Activated CD4-positive, alpha-beta memory T cell treated with anti-CD3 and anti-CD28 coated beads for 36 hours (primary cell): ENCODE measurements at regions of chr17 and their contacts with region 1.

Region 1: DNA sequence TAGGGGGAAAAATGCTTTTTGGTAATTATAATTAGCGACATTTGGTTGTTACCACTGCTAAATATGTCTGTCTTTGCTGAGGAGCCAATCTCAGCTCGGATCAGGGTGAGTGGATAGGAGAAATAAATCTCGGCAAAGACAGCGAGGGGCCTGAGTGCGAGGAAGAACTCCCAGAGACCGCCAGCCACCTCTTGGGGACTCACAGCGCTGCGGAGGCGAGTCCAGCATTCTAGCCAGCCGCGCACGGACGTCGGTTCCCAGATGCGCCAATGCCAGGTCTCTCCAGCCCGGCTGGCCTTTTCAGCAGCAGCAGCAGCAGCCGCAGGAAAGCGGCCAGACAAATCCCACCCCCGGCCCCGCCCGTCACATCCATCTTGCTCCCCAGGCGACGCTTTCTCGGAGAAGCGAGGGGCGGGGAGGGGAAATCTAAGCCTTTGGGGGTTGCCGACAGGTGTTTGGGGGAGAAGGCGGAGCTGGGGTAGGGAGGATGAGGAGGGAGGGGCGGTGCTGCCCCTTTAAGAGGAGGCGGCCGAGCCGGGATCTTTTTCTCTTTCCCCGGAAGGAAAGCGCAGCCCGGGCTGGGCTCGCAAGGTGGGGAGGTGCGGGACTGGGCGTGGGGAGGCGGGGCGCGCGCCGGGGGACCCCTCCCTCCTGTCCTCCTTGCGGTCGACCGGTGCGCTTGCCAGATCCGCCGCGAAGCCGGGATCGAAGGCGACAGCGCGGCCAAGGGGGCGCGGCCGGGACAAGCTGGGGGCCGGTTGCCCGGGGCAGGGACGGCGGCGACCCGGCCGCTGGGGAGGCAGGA is at the start of gene ITGA3:
- DNase-seq: peak; percentile 78
- H3K4me3 Mint-ChIP-seq: peak within 1 kb of the TSS; percentile 87
- H3K27ac Mint-ChIP-seq: peak within 1 kb of the TSS; percentile 84
- H3K4me1 Mint-ChIP-seq: peaks cover 31% of the 10 kb centered on the region
- H3K27me3 Mint-ChIP-seq: no peaks in the 10 kb centered on the region
- total RNA-seq, gene ITGA3: 15.8 to 17.6 TPM

Region 2: DNA sequence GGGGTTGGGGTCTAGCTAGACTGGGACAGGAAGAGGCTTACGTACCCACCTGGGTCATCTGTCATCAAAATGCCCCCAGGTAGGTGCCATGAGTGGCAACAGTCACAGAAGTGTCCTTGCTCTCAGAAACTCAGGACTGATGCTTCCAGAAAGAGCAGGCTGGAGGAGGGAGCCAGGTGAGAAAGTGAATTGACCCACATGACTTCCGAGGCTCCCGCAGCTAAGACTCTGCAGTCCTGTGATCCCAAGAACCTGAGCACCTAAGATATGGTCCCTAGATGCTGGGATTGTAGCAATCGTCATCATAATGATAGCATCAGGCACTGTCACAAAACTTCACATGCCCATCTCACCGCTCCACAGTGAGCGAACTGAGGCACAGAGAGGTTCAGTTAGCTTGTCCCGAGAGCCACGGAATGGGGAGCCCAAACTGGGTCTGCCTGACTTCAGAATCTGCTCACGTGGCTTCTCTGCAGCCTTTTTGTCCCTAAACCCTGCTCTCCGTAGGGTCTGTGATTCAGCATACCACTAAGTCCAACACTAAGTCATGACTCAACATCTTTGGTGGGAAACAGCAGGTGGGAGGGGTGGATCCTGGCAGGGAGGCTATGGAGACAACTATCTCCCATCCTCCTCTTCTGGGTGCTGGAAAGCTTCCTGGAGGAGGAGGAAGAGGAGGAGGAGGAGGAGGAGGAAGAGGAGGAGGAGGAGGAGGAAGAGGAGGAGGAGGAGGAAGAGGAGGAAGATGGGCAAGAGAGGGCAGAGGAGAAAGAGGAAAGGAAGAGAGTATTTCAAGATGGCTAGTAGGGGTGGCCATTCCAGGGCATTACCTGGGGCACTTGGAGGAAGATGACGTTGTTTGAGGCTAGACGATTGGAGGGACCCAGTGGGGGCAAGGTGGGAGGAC is 142.2 kb before region 1 on chr17:
- CTCF ChIA-PET with region 1: no interaction called
- POLR2A ChIA-PET with region 1: no interaction called
- intact Hi-C with region 1: no loop called
- DNase-seq: no peak
- H3K4me3 Mint-ChIP-seq: no peak overlapping the region
- H3K27ac Mint-ChIP-seq: no peak overlapping the region
- H3K4me1 Mint-ChIP-seq: peaks cover 4% of the 10 kb centered on the region
- H3K27me3 Mint-ChIP-seq: peaks cover 49% of the 10 kb centered on the region

Region 3: DNA sequence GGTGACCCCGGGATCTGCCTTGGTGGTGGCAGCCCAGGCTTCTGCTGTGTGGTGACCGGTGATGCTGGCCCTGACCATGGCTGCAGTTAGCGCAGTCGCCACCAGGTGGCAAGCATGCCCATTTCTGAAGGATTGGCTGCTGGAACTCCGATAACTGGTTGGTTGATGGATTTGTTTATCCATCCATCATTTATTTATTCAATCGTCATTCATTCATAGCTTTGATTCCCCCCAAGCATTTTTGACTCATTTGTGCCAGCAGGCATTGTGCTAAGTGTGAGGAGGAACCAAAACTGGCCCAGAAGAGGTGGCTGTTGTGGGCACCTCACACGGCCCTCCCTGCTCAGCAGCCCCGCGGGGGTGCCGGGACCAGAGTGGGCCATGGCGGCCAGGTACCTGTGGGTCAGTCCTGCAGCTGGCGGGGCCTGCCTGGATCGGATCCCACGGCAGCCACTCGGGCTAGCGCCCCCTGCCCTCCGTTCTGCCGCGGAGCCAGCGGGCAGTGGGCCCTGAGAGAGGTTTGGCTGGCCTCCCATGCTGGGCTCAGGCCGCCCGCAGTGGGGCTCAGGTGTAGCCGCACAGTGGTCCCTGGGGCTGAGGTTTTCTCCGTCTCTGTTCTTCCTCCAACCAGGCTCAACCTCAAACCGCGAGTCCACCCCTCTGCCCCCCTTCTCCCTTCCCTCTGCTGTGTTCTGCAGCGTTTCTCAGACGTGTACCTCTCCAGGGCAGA is 28.6 kb before region 1 on chr17:
- CTCF ChIA-PET with region 1: interaction called, 85 read pairs
- POLR2A ChIA-PET with region 1: no interaction called
- intact Hi-C with region 1: loop called (anchors 1 kb)
- DNase-seq: peak; percentile 87
- H3K4me3 Mint-ChIP-seq: peak overlapping the region; percentile 44
- H3K27ac Mint-ChIP-seq: no peak overlapping the region
- H3K4me1 Mint-ChIP-seq: peaks cover 6% of the 10 kb centered on the region
- H3K27me3 Mint-ChIP-seq: peaks cover 26% of the 10 kb centered on the region

Region 4: DNA sequence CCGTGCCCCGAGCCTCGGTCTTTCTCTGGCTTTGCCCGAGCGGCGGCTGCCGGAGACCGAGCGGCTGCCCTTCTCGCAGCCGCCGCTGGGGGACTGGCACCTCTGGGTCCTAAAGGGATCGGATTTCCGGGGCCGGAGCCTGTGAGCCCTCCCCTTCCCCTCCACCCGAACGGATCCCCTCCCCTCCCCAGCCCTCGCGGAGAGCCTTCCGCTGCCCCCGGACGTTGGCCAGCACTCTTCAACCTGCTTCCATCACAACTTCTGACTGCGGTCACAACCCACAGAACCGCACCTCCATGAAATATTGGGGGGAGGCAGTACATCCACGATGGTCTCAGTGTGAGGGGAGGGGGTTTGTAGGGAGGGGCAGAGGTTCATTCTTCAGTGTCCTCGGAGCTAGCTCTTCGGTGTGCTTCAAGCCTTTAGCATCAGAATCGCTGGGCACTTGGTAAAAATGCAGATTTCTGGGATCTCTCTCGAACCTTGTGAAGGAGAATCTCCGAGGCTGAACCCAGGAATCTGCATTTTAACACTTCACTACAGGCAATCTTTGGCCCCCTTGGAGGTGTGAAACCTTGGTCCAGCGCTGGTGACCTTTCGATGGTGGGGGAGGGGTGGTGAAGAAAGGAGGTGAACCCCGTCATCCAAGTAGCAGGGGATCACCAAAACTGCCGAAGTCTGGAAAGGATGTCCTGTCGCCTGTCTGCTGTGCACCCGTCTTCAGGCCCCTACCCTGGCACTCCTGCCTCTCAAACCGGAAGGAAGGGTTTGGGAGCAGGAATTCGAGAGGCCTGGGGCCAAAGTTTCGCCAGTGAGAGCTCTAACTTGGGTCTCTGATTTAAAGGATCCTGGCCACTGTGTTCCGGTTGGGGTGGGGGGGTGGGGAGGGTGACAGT is 95.7 kb after region 1 on chr17:
- CTCF ChIA-PET with region 1: interaction called, 3 read pairs
- POLR2A ChIA-PET with region 1: no interaction called
- intact Hi-C with region 1: loop called (anchors 5 kb)
- DNase-seq: peak; percentile 94
- H3K4me3 Mint-ChIP-seq: peak overlapping the region; percentile 87
- H3K27ac Mint-ChIP-seq: peak overlapping the region; percentile 97
- H3K4me1 Mint-ChIP-seq: peaks cover 38% of the 10 kb centered on the region
- H3K27me3 Mint-ChIP-seq: no peaks in the 10 kb centered on the region